ENCODE measurements at regions of chr12 and their contacts with region 1.

Region 1: DNA sequence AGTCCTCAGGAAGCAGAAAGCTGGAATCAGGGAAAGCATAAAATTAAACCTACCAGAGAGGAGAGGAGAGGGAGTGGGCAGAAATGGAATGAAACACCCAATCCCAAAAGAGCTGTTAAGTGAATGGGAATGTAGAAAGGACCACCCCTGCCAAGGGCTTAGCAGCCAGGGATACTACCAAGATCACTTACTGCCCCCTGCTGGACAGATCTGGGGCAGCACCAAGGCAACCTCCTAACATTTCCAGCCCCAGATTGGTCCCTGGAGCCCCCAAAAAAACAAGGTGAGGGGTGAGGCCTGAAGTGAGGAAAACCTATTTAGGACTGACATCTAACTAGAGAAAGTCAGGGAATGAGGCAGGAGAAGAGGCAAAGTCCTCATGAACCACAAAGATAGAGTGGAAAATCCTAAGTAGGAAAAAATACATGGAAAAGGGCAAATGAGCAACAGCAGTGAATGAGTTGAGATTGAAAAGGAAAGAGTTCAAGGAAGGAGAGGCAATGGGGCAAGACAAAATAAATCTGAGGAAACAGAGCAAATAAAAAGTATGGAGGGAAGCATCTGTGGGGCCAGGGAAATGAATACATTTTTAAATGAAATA is 11.2 kb upstream of the FKBP11 start:
- DNase-seq: peak; percentile 83
- H3K4me3 Mint-ChIP-seq: no peak overlapping the region
- H3K27ac Mint-ChIP-seq: no peak overlapping the region
- H3K4me1 Mint-ChIP-seq: peaks cover 28% of the 10 kb centered on the region
- H3K27me3 Mint-ChIP-seq: no peaks in the 10 kb centered on the region

Region 2: GRCh38 chr12:48865434-48866290 is 70.8 kb before region 1 on chr12 and contains the start of gene RND1:
- CTCF ChIA-PET with region 1: interaction called, 10 read pairs
- POLR2A ChIA-PET with region 1: interaction called, 4 read pairs
- DNase-seq: peak; percentile 85
- H3K4me3 Mint-ChIP-seq: peak within 1 kb of the TSS; percentile 82
- H3K27ac Mint-ChIP-seq: peak within 1 kb of the TSS; percentile 32
- H3K4me1 Mint-ChIP-seq: peaks cover 28% of the 10 kb centered on the region
- H3K27me3 Mint-ChIP-seq: peaks cover 24% of the 10 kb centered on the region
- total RNA-seq, gene RND1: 2.6 to 3.0 TPM

Region 3: DNA sequence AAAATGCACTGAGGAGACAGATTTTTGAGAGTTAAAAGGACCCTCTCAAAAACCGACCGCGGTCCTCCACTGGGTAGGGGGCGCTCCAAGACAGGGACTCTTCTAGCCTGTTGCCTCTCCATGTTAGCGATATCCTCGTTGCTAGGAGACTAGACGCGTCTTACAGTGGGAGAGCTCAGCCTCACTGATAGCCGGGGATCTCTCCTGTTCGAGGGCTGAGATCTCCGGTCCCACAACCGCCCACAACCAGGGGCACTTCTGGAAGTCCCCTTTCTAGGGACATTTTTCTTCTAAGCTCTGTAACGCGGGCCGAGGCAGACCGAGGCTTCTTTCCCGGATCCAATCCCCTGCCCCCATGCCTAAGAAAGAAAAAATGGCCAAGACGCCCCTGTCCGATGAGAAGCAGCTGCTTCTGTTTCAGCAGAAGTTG is 32.5 kb before region 1 on chr12:
- CTCF ChIA-PET with region 1: interaction called, 40 read pairs
- POLR2A ChIA-PET with region 1: interaction called, 4 read pairs
- DNase-seq: peak; percentile 84
- H3K4me3 Mint-ChIP-seq: peak overlapping the region; percentile 52
- H3K27ac Mint-ChIP-seq: no peak overlapping the region
- H3K4me1 Mint-ChIP-seq: peaks cover 21% of the 10 kb centered on the region
- H3K27me3 Mint-ChIP-seq: peaks cover 8% of the 10 kb centered on the region

Region 4: DNA sequence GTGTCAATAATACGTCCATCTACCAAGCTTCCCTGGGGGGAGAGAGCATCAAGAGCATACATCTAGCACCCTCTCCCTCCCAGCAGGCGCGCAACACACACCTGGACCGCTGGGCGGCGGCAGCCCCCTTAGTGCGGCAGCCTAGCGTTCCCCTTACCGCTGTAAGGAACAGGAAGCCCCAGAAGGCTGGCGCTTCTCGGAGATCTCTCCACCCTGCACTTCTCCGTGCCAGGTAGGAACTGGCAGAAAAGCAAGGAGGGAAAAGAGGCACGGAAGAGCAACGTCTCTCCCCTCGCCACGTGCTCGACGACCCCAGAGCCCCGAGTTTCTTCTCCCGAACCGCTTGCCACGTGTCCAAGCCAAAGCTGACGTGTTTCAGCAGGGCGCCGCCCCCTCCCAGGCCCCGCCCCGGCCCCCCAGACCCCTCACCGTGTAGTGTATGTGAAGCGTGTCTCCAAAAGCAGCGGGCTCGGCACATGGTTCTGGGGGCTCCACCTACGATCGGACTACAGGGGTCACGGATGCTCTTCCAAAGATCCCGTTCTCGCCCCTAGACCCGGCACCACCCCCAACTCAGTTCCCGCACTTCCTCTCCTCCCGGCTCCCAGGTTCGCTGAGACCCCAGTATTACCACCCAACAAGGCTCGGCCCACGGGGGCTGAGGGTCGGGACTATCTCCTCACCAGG is 11.7 kb before region 1 on chr12:
- CTCF ChIA-PET with region 1: interaction called, 26 read pairs
- POLR2A ChIA-PET with region 1: interaction called, 30 read pairs
- DNase-seq: peak; percentile 71
- H3K4me3 Mint-ChIP-seq: peak overlapping the region; percentile 94
- H3K27ac Mint-ChIP-seq: peak overlapping the region; percentile 89
- H3K4me1 Mint-ChIP-seq: peaks cover 43% of the 10 kb centered on the region
- H3K27me3 Mint-ChIP-seq: no peaks in the 10 kb centered on the region